ENCODE measurements at regions of chr4 and their contacts with region 1.

Region 1: GRCh38 chr4:22410645-22411247 is 105.1 kb downstream of the ADGRA3 start:
- DNase-seq: no peak
- ATAC-seq: no peak
- H3K4me3 ChIP-seq: no peak overlapping the region
- H3K27ac ChIP-seq: no peak overlapping the region
- H3K4me1 ChIP-seq: no peaks in the 10 kb centered on the region
- H3K27me3 ChIP-seq: no peaks in the 10 kb centered on the region
- CTCF ChIP-seq: peak; percentile 26 to 68 (median 32)
- POLR2A ChIP-seq: no peak

Region 2: DNA sequence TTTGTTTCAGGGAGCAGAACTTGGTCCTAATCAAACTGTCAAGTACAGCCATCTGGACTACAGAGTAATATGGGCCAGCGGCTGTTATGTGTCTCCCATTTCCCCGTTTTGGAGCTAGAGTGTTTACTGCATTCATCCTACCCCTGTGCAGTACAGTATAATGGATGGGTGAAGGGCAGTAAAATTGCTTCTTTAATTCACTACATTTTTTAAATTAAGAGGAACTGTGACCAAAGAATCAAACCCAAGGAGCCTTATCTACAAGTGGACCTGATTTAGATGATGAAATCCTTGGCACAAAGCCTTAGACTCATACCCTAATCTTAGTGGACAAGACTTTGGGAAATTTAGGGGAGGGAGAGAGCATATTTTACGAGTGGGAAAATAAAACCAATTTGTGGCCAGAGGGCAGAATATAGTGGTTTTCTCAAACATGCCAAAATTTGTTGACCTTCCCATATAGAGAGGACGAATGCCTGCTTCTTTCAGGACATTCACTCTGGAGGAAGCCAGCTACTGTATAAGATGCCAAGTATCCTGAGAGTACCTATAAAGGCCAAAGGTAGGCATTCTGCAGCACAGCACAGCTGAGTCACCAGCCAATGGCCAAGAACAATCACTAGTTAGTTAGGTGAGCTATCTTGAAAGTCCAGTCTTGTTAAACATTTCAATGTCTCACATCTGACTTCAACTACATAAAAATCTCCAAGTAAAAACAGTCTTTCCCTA is 208.3 kb before region 1 on chr4:
- in situ Hi-C with region 1: no loop called
- intact Hi-C with region 1: no loop called
- DNase-seq: no peak
- ATAC-seq: no peak
- H3K4me3 ChIP-seq: no peak overlapping the region
- H3K27ac ChIP-seq: no peak overlapping the region
- H3K4me1 ChIP-seq: no peaks in the 10 kb centered on the region
- H3K27me3 ChIP-seq: no peaks in the 10 kb centered on the region
- CTCF ChIP-seq: no peak
- POLR2A ChIP-seq: no peak

Region 3: DNA sequence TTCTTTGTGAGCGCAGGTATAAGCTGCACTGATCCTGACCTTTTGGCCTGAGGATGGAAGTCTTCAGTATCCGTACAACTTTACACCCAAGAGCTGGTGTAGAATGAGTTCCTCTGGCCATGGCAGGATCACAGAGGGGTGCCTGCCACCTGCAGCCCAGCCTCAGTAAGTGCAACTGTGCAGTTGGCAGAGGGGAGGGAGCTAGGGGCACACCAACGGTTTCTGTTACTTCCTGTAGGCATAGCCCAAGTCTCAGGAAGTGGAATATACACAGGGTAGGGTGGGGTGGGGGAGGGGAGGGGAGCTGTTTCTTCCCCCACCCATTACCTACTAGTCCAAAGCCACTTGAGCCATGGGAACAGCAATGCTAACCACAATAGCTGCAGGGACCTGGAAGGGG is 196.6 kb after region 1 on chr4:
- in situ Hi-C with region 1: loop called (anchors 5 to 10 kb)
- intact Hi-C with region 1: loop called (anchors 2 kb)
- DNase-seq: peak; percentile 14 to 34
- ATAC-seq: peak; percentile 74 to 77
- H3K4me3 ChIP-seq: no peak overlapping the region
- H3K27ac ChIP-seq: no peak overlapping the region
- H3K4me1 ChIP-seq: no peaks in the 10 kb centered on the region
- H3K27me3 ChIP-seq: no peaks in the 10 kb centered on the region
- CTCF ChIP-seq: peak; percentile 9 to 72 (median 56)
- POLR2A ChIP-seq: no peak

Region 4: DNA sequence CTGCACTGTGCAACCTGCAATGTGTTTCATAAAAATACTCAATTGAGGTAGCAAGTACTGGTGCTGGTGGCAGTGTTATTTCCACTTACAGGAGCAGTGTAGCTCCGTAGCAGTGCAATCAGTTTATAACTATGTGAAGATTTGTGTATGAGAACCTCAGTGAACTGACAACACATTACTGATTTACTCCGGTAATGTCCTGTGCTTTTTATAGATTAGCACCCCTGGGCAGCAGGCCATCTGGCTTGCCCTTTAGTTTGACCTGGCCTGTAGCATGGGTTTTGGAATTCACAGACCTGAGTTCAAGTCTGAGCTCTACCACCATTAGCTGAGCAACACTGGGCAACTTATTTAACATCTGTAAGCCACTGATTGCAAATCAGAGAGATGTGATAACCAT is 203.4 kb after region 1 on chr4:
- in situ Hi-C with region 1: loop called (anchors 5 to 10 kb)
- intact Hi-C with region 1: no loop called
- DNase-seq: no peak
- ATAC-seq: no peak
- H3K4me3 ChIP-seq: no peak overlapping the region
- H3K27ac ChIP-seq: no peak overlapping the region
- H3K4me1 ChIP-seq: no peaks in the 10 kb centered on the region
- H3K27me3 ChIP-seq: no peaks in the 10 kb centered on the region
- CTCF ChIP-seq: no peak
- POLR2A ChIP-seq: no peak

Region 5: DNA sequence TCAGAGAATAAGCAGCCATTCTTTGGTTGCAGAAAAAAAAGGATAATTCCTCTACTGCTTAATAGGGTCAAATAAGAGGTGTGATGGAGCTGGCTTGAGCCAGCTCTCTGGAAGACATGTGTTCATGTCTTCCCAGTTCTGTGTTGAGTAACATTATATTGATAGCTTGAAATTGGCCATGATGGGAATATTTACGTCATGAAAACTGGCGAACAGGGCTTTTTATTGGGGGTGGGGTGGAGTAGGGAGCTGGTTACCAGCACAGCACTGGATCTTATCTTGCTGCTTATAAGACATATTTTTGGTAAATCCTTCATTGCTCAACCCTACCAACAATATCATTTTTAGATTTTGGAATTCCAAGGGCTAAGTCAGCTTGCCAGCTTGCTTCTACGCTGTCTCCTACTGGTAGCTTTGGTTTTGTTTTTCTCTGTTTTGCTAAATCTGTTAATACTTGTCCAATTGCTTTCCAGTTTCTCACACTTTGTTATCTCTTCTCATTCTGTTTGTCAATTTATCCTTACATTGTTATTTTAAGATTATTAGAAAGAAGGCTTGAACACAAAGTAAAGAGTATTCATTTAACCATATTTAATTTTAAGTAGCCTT is 256.7 kb after region 1 on chr4:
- in situ Hi-C with region 1: no loop called
- intact Hi-C with region 1: no loop called
- DNase-seq: no peak
- ATAC-seq: no peak
- H3K4me3 ChIP-seq: no peak overlapping the region
- H3K27ac ChIP-seq: no peak overlapping the region
- H3K4me1 ChIP-seq: no peaks in the 10 kb centered on the region
- H3K27me3 ChIP-seq: no peaks in the 10 kb centered on the region
- CTCF ChIP-seq: no peak
- POLR2A ChIP-seq: no peak

Region 6: GRCh38 chr4:22678940-22679854 is 268.5 kb after region 1 on chr4:
- in situ Hi-C with region 1: loop called in 1 of 4 experiments (anchors 10 kb)
- intact Hi-C with region 1: loop called (anchors 5 kb)
- DNase-seq: peak in 1 of 2 donors; percentile 4
- ATAC-seq: peak; percentile 85 to 92
- H3K4me3 ChIP-seq: no peak overlapping the region
- H3K27ac ChIP-seq: peak overlapping the region; percentile 43 to 71 (median 50)
- H3K4me1 ChIP-seq: peaks cover 12 to 13% of the 10 kb centered on the region in 2 donors
- H3K27me3 ChIP-seq: no peaks in the 10 kb centered on the region
- CTCF ChIP-seq: no peak
- POLR2A ChIP-seq: no peak

Region 7: DNA sequence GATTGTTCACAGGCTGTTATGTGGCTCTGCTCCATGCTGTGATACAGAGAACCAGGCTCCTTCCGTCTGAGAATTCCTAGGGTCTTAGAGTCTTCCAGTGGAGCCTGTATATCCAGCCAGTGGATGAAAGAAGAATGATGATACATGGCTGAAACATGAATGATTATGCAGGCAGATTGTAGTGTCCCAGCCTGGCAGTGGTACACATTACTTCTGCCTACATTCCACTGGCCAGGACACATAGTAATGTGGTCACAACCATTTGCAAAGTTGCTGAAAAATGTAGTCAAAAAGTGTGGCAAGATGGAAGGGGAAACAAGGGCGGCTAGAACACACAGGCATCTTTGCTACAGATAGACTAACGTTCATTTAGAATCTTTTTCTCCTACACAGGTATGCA is 277.5 kb after region 1 on chr4:
- in situ Hi-C with region 1: loop called (anchors 5 to 10 kb)
- intact Hi-C with region 1: loop called (anchors 1 kb)
- DNase-seq: no peak
- ATAC-seq: no peak
- H3K4me3 ChIP-seq: no peak overlapping the region
- H3K27ac ChIP-seq: no peak overlapping the region
- H3K4me1 ChIP-seq: no peaks in the 10 kb centered on the region
- H3K27me3 ChIP-seq: no peaks in the 10 kb centered on the region
- CTCF ChIP-seq: no peak
- POLR2A ChIP-seq: no peak

Measured in gastrocnemius medialis (tissue), 4 donors.